CD4-positive, alpha-beta memory T cell (primary cell): ENCODE measurements at regions of chr12 and their contacts with region 1.

Region 1: GRCh38 chr12:1812650-1813302 is 7.6 kb upstream of the LRTM2 start:
- DNase-seq: no peak
- H3K4me3 ChIP-seq: no peak overlapping the region
- H3K4me3 Mint-ChIP-seq: peak overlapping the region in 6 of 8 donors; percentile 14 to 60 (median 50)
- H3K27ac ChIP-seq: peak overlapping the region; percentile 6
- H3K27ac Mint-ChIP-seq: peak overlapping the region; percentile 9 to 85 (median 75)
- H3K4me1 ChIP-seq: peaks cover 29% of the 10 kb centered on the region
- H3K4me1 Mint-ChIP-seq: peaks cover 3 to 35% (median 13%) of the 10 kb centered on the region in 4 donors
- H3K27me3 ChIP-seq: no peaks in the 10 kb centered on the region
- H3K27me3 Mint-ChIP-seq: peaks cover 3 to 5% of the 10 kb centered on the region in 2 donors

Region 2: DNA sequence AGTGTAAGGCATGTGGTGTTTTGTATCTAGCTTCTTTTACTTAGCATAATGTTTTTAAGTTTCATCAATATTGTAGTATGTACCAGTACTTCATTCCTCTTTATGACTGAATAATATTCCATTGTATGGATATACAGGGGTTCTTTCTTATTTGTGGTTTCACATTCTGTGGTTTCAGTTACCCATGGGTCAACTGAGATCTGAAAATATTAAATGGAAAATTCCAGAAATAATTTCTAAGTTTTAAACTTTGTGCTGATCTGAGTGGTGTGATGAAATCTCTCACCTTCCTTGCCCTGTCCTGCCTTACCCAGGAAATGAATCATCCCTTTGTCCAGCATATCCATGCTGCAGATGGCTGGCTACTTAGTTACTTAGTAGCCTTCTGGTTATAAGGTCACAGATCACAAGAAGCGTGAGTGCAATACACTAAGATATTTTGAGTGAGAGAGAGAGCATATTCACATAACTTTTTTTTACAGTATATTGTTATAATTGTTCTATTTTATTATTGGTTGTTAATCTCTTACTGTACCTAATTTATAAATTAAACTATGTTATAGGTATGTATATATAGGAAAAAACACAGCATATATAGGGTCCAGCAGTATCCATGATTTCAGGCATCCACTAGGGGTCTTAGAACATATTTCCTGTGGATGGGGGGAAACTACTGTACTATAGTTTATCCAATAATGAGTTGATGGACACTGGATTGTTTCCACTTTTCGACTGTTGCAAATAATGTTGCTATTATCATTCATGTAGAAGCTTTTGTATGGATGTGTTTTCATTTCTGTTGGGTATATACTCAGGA is 52.0 kb before region 1 on chr12:
- CTCF ChIA-PET with region 1: no interaction called
- POLR2A ChIA-PET with region 1: no interaction called
- intact Hi-C with region 1: no loop called
- DNase-seq: no peak
- H3K4me3 ChIP-seq: no peak overlapping the region
- H3K4me3 Mint-ChIP-seq: no peak overlapping the region
- H3K27ac ChIP-seq: no peak overlapping the region
- H3K27ac Mint-ChIP-seq: peak overlapping the region in 2 of 7 donors; percentile 1 to 19
- H3K4me1 ChIP-seq: no peaks in the 10 kb centered on the region
- H3K4me1 Mint-ChIP-seq: peaks cover 3 to 17% (median 11%) of the 10 kb centered on the region in 4 donors
- H3K27me3 ChIP-seq: no peaks in the 10 kb centered on the region
- H3K27me3 Mint-ChIP-seq: no peaks in the 10 kb centered on the region

Region 3: GRCh38 chr12:1916371-1917171 is 103.8 kb after region 1 on chr12:
- CTCF ChIA-PET with region 1: no interaction called
- POLR2A ChIA-PET with region 1: interaction called, 3 read pairs
- intact Hi-C with region 1: loop called (anchors 5 kb)
- DNase-seq: no peak
- H3K4me3 ChIP-seq: no peak overlapping the region
- H3K4me3 Mint-ChIP-seq: peak overlapping the region in 4 of 8 donors; percentile 23 to 69 (median 54)
- H3K27ac ChIP-seq: no peak overlapping the region
- H3K27ac Mint-ChIP-seq: peak overlapping the region in 5 of 7 donors; percentile 15 to 92 (median 74)
- H3K4me1 ChIP-seq: peaks cover 24% of the 10 kb centered on the region
- H3K4me1 Mint-ChIP-seq: peaks cover 15 to 21% (median 17%) of the 10 kb centered on the region in 4 donors
- H3K27me3 ChIP-seq: no peaks in the 10 kb centered on the region
- H3K27me3 Mint-ChIP-seq: peaks cover 0 to 4% of the 10 kb centered on the region in 2 donors

Region 4: DNA sequence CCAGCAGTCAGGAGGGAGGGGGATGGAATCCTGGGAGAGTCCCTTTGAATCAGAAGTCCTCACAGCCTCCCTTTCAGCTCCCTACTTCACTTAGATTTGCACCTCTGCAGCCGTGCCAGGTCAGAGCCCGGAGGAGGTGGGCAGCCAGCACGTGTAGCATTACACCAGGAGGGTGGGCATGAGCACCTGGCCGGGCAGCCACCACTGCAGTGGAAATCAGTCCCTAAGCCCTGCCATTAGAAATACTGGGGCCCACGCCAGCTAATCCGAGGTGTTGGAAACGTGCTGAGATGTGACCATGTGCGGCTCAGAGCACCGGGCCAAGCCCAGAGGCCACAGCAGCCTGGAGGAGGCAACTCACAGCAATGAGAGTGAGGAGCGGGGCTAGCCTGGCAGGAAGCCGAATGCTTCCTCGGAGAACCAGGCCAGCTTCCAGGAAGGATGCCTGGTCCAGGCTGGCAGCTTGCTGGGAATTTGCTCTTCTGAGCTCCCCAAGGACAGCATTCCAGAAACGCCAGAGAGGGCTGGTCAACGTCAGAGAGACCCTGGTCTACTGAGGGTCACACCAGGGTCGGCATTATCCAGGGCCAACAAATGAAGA is 115.1 kb after region 1 on chr12:
- CTCF ChIA-PET with region 1: no interaction called
- POLR2A ChIA-PET with region 1: no interaction called
- intact Hi-C with region 1: no loop called
- DNase-seq: no peak
- H3K4me3 ChIP-seq: no peak overlapping the region
- H3K4me3 Mint-ChIP-seq: no peak overlapping the region
- H3K27ac ChIP-seq: no peak overlapping the region
- H3K27ac Mint-ChIP-seq: no peak overlapping the region
- H3K4me1 ChIP-seq: peaks cover 6% of the 10 kb centered on the region
- H3K4me1 Mint-ChIP-seq: peaks cover 8 to 15% (median 11%) of the 10 kb centered on the region in 4 donors
- H3K27me3 ChIP-seq: no peaks in the 10 kb centered on the region
- H3K27me3 Mint-ChIP-seq: peaks cover 4 to 6% of the 10 kb centered on the region in 2 donors